CD4-positive, alpha-beta memory T cell (primary cell): ENCODE measurements at regions of chr2 and their contacts with region 1.

Region 1: GRCh38 chr2:60998628-60999545 is 18.6 kb upstream of the PEX13 start:
- DNase-seq: peak in 4 of 5 donors; percentile 55 to 64 (median 59)
- H3K4me3 ChIP-seq: no peak overlapping the region
- H3K4me3 Mint-ChIP-seq: no peak overlapping the region
- H3K27ac ChIP-seq: no peak overlapping the region
- H3K27ac Mint-ChIP-seq: peak overlapping the region in 2 of 7 donors; percentile 4 to 36
- H3K4me1 ChIP-seq: no peaks in the 10 kb centered on the region
- H3K4me1 Mint-ChIP-seq: peaks cover 0 to 2% (median 0%) of the 10 kb centered on the region in 4 donors
- H3K27me3 ChIP-seq: no peaks in the 10 kb centered on the region
- H3K27me3 Mint-ChIP-seq: no peaks in the 10 kb centered on the region

Region 2: DNA sequence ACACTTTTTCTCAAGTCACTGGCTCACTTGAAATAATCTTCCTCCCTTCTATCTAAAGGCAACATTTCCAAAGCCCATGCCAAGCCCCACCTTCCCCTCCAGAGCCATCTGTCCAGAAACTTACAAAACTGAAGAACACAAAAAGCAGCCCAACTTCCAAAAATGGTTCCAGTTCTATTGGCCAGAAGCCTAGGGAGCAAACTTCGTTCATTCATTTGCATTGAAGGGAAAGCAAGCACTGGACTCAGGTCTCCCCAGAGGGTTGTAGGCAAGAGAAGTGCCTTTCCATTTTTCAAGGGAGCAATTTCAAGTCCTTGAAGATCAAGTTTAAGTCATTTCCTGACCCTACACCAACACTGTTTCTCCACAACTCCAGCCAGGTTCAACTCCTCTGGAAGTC is 1030.4 kb before region 1 on chr2:
- CTCF ChIA-PET with region 1: no interaction called
- POLR2A ChIA-PET with region 1: no interaction called
- intact Hi-C with region 1: no loop called
- DNase-seq: no peak
- H3K4me3 ChIP-seq: no peak overlapping the region
- H3K4me3 Mint-ChIP-seq: no peak overlapping the region
- H3K27ac ChIP-seq: no peak overlapping the region
- H3K27ac Mint-ChIP-seq: no peak overlapping the region
- H3K4me1 ChIP-seq: no peaks in the 10 kb centered on the region
- H3K4me1 Mint-ChIP-seq: no peaks in the 10 kb centered on the region
- H3K27me3 ChIP-seq: no peaks in the 10 kb centered on the region
- H3K27me3 Mint-ChIP-seq: no peaks in the 10 kb centered on the region

Region 3: GRCh38 chr2:60707750-60708371 is 291.0 kb before region 1 on chr2:
- CTCF ChIA-PET with region 1: interaction called, 181 read pairs
- POLR2A ChIA-PET with region 1: interaction called, 3 read pairs
- intact Hi-C with region 1: loop called (anchors 1 kb)
- DNase-seq: peak in 4 of 5 donors; percentile 31 to 39 (median 32)
- H3K4me3 ChIP-seq: no peak overlapping the region
- H3K4me3 Mint-ChIP-seq: no peak overlapping the region
- H3K27ac ChIP-seq: no peak overlapping the region
- H3K27ac Mint-ChIP-seq: no peak overlapping the region
- H3K4me1 ChIP-seq: no peaks in the 10 kb centered on the region
- H3K4me1 Mint-ChIP-seq: no peaks in the 10 kb centered on the region
- H3K27me3 ChIP-seq: no peaks in the 10 kb centered on the region
- H3K27me3 Mint-ChIP-seq: peaks cover 6 to 12% of the 10 kb centered on the region in 2 donors

Region 4: GRCh38 chr2:60794277-60794863 is 204.5 kb before region 1 on chr2:
- CTCF ChIA-PET with region 1: interaction called, 41 read pairs
- POLR2A ChIA-PET with region 1: interaction called, 3 read pairs
- intact Hi-C with region 1: loop called (anchors 1 kb)
- DNase-seq: peak in 4 of 5 donors; percentile 43 to 49 (median 45)
- H3K4me3 ChIP-seq: no peak overlapping the region
- H3K4me3 Mint-ChIP-seq: no peak overlapping the region
- H3K27ac ChIP-seq: no peak overlapping the region
- H3K27ac Mint-ChIP-seq: peak overlapping the region in 4 of 7 donors; percentile 10 to 57 (median 46)
- H3K4me1 ChIP-seq: peaks cover 4% of the 10 kb centered on the region
- H3K4me1 Mint-ChIP-seq: peaks cover 5 to 13% (median 9%) of the 10 kb centered on the region in 4 donors
- H3K27me3 ChIP-seq: no peaks in the 10 kb centered on the region
- H3K27me3 Mint-ChIP-seq: no peaks in the 10 kb centered on the region

Region 5: GRCh38 chr2:60806988-60807681 is 191.8 kb before region 1 on chr2:
- CTCF ChIA-PET with region 1: interaction called, 91 read pairs
- POLR2A ChIA-PET with region 1: interaction called, 6 read pairs
- intact Hi-C with region 1: loop called (anchors 1 kb)
- DNase-seq: peak; percentile 37 to 74 (median 41)
- H3K4me3 ChIP-seq: no peak overlapping the region
- H3K4me3 Mint-ChIP-seq: peak overlapping the region in 7 of 8 donors; percentile 29 to 75 (median 69)
- H3K27ac ChIP-seq: peak overlapping the region; percentile 51
- H3K27ac Mint-ChIP-seq: peak overlapping the region; percentile 86 to 97 (median 93)
- H3K4me1 ChIP-seq: peaks cover 49% of the 10 kb centered on the region
- H3K4me1 Mint-ChIP-seq: peaks cover 30 to 60% (median 48%) of the 10 kb centered on the region in 4 donors
- H3K27me3 ChIP-seq: no peaks in the 10 kb centered on the region
- H3K27me3 Mint-ChIP-seq: no peaks in the 10 kb centered on the region

Region 6: DNA sequence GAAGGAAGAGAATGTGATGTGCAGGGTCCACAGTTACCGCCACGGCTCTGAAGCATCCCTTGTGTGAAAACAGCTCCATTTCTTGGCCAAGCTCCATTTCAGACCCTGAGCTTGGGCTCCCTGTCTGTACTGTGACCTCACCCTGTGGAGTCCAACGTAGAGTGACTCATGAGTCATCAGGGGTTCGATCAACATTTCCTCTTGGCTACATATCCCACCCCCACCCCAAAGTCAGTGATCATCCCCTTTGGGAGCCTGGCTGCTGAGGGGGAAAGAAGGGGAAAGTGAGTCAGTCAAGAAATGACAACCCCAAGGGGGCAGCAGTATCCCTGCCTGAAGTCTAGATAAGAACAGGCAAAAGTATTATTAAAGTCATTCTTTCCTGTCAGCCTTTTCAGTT is 180.6 kb before region 1 on chr2:
- CTCF ChIA-PET with region 1: interaction called, 39 read pairs
- POLR2A ChIA-PET with region 1: interaction called, 4 read pairs
- intact Hi-C with region 1: loop called (anchors 1 kb)
- DNase-seq: peak in 1 of 5 donors; percentile 73
- H3K4me3 ChIP-seq: no peak overlapping the region
- H3K4me3 Mint-ChIP-seq: peak overlapping the region in 5 of 8 donors; percentile 11 to 78 (median 53)
- H3K27ac ChIP-seq: no peak overlapping the region
- H3K27ac Mint-ChIP-seq: peak overlapping the region; percentile 90 to 98 (median 97)
- H3K4me1 ChIP-seq: peaks cover 35% of the 10 kb centered on the region
- H3K4me1 Mint-ChIP-seq: peaks cover 25 to 56% (median 40%) of the 10 kb centered on the region in 4 donors
- H3K27me3 ChIP-seq: no peaks in the 10 kb centered on the region
- H3K27me3 Mint-ChIP-seq: peaks cover 0 to 5% of the 10 kb centered on the region in 2 donors

Region 7: DNA sequence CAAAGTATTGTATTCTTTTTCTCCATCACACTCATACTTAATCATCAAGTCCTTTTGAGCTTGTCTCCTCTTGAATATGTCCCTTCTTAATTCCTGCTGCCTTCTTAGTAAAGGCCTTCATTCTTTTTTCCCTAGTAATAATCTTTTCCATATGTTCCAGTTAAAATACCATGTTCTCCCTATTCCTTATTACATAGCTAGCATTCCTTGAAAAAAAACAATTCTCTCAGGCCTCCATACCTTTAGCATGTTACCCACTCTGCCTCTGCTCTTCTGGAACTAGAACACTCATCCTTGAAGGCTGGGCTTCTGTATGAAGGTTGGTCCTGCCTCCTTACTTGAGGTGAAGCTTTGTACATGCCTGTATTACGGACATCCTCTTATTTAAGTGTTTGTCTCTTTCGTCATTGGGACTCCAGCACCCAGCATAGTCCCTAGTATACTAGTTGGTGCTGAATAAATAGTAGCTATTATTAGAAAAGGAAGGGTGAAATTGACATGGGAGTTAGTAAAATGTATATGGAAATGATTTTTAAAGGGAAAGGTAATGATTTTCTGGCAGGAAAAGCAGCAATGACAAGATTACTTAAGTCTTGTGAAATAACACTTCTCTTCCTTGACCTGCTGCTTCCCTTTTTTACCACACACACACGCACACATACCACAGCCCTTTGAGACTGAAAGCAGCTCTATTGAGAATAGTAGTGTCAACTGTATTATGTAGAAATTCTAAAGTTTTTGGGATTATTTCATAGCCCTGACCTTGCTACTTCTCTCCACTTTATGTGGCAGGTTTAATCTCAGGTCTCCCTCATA is 71.9 kb before region 1 on chr2:
- CTCF ChIA-PET with region 1: no interaction called
- POLR2A ChIA-PET with region 1: no interaction called
- intact Hi-C with region 1: loop called (anchors 5 kb)
- DNase-seq: no peak
- H3K4me3 ChIP-seq: no peak overlapping the region
- H3K4me3 Mint-ChIP-seq: no peak overlapping the region
- H3K27ac ChIP-seq: no peak overlapping the region
- H3K27ac Mint-ChIP-seq: peak overlapping the region in 2 of 7 donors; percentile 2 to 80
- H3K4me1 ChIP-seq: no peaks in the 10 kb centered on the region
- H3K4me1 Mint-ChIP-seq: peaks cover 0 to 4% (median under 1%) of the 10 kb centered on the region in 4 donors
- H3K27me3 ChIP-seq: no peaks in the 10 kb centered on the region
- H3K27me3 Mint-ChIP-seq: no peaks in the 10 kb centered on the region